CD8-positive, alpha-beta T cell (primary cell): ENCODE measurements at regions of chr2 and their contacts with region 1.

Region 1: DNA sequence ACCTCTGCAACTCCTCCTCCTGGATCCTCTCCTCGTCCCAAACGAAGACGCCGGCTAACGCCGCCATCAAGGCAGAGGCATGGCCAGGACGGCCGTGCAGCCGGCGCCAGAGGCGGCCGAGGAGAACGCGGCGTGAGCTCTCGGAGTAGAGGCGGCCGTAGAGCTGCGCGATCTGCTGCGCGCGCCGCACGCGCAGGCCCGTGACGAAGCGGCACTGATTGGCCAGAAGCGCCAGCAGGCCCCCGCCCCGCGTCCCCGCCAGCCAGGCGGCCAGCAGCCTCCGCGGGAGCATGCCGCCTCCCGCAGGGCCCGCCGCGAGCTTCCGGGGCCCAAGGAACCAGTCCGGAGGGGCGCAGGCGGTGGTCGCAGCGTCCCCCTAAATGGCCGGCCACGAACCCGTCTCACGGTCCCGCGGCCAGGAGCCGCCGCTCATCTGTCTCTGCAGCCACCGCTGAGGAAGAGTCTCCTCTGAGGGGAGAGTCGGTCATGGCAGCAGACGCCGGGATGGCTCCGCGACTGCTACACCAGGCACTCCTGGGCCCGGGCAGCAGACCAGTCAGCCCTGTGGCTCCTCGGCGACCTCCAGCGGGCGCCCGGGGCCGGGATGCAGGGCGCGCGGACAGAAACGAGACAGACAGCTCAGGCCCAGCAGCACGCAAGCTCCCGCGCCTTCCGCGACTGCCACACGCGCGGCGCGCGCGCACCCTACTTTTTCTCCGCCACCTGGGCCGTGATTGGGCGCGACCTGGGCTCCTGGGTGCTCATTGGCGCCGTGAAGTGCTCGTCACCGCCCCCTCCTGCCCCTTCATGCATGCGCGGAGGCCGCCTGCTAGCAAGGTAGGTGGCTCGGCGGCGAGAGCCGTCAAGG is at the start of gene STARD7:
- DNase-seq: peak; percentile 89 to 98 (median 96)
- ATAC-seq: peak; percentile 85
- H3K4me3 ChIP-seq: peak within 1 kb of the TSS; percentile 91
- H3K4me3 Mint-ChIP-seq: peak within 1 kb of the TSS; percentile 100
- H3K27ac ChIP-seq: peak within 1 kb of the TSS; percentile 75
- H3K27ac Mint-ChIP-seq: peak within 1 kb of the TSS; percentile 99
- H3K4me1 ChIP-seq: peaks cover 52% of the 10 kb centered on the region
- H3K4me1 Mint-ChIP-seq: peaks cover 54% of the 10 kb centered on the region
- H3K27me3 ChIP-seq: no peaks in the 10 kb centered on the region
- H3K27me3 Mint-ChIP-seq: no peaks in the 10 kb centered on the region
- CTCF ChIP-seq: no peak
- total RNA-seq, gene STARD7: 75.3 to 85.1 TPM

Region 2: DNA sequence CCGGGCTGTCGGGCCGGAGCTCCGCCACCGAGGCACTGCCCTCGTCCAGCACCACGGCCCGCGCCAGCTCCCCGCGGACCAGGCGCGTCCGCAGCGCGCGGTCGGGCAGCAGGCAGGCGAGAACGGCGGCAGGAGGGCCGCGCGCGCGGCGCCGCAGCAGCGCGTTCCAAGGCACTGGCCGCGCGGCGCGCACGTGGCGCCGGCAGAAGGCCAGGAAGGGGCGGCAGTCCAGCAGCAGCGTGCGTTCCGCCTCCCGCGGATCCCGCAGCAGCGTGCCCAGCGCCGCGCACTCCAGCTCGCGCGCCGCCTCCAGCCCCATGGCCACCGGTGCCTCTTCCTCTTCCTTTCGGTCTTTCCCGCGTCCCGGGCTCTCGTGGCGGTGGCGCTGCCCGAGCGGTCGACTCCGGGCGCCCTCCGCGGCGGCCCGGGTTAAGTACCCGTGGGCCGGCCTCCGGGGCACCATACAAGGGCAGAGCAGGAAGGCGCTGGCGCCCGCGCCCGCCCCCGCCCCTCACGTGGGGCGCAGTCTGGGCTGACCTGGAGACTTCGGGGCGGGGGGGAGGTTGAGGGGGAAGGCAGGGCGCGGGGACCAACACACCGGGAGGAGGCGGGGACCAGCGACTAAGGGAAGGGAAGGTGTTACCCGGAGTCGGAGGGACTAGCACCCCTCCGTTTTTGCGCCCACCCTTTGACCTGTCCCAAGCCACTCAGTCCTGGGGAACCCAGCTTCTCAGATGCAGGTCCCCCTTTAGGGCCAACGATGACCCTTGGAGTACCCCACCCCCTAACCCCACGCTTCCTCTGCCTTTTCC is 63.1 kb before region 1 on chr2 and contains the start of gene DUSP2:
- CTCF ChIA-PET with region 1: no interaction called
- POLR2A ChIA-PET with region 1: interaction called, 12 read pairs
- intact Hi-C with region 1: loop called (anchors 2 kb)
- DNase-seq: peak; percentile 80 to 97 (median 91)
- ATAC-seq: peak; percentile 37
- H3K4me3 ChIP-seq: peak within 1 kb of the TSS; percentile 91 to 96
- H3K4me3 Mint-ChIP-seq: peak within 1 kb of the TSS; percentile 94
- H3K27ac ChIP-seq: peak within 1 kb of the TSS; percentile 98 to 99
- H3K27ac Mint-ChIP-seq: peak within 1 kb of the TSS; percentile 94
- H3K4me1 ChIP-seq: peaks cover 61% of the 10 kb centered on the region
- H3K4me1 Mint-ChIP-seq: peaks cover 57% of the 10 kb centered on the region
- H3K27me3 ChIP-seq: no peaks in the 10 kb centered on the region
- H3K27me3 Mint-ChIP-seq: no peaks in the 10 kb centered on the region
- CTCF ChIP-seq: no peak
- total RNA-seq, gene DUSP2: 1,304 to 1,350 TPM

Region 3: DNA sequence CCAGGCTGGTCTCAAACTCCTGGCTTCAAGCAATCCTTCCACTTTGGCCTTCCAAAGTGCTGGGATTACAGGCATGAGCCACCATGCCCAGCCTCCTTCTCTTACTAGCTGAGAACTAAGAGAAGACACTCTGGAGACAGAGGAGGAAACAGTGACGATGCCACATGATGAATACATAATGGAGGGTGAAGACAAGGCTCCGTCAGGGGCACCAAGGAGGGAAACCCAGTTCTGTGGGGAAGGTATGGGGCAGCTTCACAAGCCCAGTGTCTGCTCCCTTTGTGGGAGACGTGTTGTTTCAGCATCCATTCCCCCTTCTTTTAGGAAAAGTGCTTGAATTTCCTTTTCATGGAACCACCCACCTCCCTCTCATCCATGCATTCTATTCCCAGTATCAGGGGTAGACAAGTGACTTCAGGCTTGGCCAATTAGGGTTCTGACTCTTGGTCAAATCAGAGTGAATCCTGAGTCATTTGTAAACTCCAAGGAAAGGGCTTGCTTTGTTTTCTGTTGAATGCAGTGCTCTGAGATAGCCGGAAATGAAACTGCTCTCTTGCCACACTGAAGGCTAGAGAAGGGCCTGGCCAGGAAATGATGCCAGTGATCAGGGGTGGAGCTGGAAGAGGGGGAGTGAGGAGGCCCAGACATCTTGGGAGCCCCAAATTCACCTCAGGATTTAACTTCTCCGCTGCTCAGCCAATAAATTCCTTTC is 33.7 kb after region 1 on chr2:
- CTCF ChIA-PET with region 1: no interaction called
- POLR2A ChIA-PET with region 1: interaction called, 6 read pairs
- intact Hi-C with region 1: loop called in 1 of 2 experiments (anchors 2 kb)
- DNase-seq: peak in 7 of 9 experiments; percentile 26 to 78 (median 53)
- ATAC-seq: peak; percentile 82
- H3K4me3 ChIP-seq: peak overlapping the region; percentile 6 to 10
- H3K4me3 Mint-ChIP-seq: peak overlapping the region; percentile 68
- H3K27ac ChIP-seq: peak overlapping the region; percentile 46 to 94
- H3K27ac Mint-ChIP-seq: peak overlapping the region; percentile 94
- H3K4me1 ChIP-seq: peaks cover 41% of the 10 kb centered on the region
- H3K4me1 Mint-ChIP-seq: peaks cover 40% of the 10 kb centered on the region
- H3K27me3 ChIP-seq: no peaks in the 10 kb centered on the region
- H3K27me3 Mint-ChIP-seq: no peaks in the 10 kb centered on the region
- CTCF ChIP-seq: no peak

Region 4: DNA sequence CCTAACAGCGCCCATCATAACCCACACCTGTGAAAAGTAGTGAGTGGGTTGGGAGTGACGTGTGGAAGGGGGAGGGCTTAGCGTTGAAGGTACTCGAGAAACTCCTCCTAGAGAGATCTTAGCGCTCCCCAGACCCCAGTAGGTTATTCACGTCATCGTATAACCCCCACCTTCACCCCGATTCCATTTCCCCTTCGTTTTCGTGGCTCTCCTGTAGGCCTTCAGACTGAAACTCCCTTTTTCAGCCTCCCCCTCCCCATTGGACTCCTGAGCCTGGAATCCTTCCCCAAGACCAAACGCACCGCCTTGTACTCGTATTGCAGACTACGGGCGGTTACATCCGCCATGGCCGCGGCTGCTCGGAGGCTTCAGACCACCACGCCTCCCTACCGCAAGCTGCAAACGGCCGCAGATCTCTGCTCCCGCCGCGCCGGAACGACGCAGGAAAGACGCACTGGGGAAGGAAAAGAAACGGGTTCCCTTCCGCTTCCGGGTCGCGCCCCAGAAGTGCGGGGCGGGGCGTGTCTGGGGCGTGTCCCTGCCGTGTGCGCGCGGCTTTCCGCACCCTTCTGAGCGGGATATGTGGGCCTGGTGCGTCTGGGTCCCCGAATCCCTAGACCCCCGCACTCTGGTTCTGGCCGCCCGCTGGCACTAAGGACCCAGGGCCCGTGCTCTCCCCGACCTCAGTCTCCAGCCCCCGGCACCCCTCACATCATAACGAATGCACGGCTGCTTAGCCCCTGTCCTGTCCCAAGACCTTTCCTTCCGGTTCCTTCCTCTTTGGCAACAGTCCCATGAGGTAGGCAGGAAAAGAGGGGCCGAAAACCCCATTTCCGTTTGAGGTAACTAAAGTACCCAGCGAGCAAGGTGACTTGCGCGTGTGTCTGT is 97.0 kb after region 1 on chr2 and contains the start of gene SNRNP200:
- CTCF ChIA-PET with region 1: no interaction called
- POLR2A ChIA-PET with region 1: interaction called, 7 read pairs
- intact Hi-C with region 1: loop called in 1 of 2 experiments (anchors 1 kb)
- DNase-seq: peak; percentile 78 to 97 (median 91)
- ATAC-seq: peak; percentile 82
- H3K4me3 ChIP-seq: peak within 1 kb of the TSS; percentile 84 to 95
- H3K4me3 Mint-ChIP-seq: peak within 1 kb of the TSS; percentile 100
- H3K27ac ChIP-seq: peak within 1 kb of the TSS; percentile 96 to 98
- H3K27ac Mint-ChIP-seq: peak within 1 kb of the TSS; percentile 100
- H3K4me1 ChIP-seq: peaks cover 39% of the 10 kb centered on the region
- H3K4me1 Mint-ChIP-seq: peaks cover 55% of the 10 kb centered on the region
- H3K27me3 ChIP-seq: no peaks in the 10 kb centered on the region
- H3K27me3 Mint-ChIP-seq: no peaks in the 10 kb centered on the region
- CTCF ChIP-seq: no peak
- total RNA-seq, gene SNRNP200: 318 to 348 TPM

Region 5: DNA sequence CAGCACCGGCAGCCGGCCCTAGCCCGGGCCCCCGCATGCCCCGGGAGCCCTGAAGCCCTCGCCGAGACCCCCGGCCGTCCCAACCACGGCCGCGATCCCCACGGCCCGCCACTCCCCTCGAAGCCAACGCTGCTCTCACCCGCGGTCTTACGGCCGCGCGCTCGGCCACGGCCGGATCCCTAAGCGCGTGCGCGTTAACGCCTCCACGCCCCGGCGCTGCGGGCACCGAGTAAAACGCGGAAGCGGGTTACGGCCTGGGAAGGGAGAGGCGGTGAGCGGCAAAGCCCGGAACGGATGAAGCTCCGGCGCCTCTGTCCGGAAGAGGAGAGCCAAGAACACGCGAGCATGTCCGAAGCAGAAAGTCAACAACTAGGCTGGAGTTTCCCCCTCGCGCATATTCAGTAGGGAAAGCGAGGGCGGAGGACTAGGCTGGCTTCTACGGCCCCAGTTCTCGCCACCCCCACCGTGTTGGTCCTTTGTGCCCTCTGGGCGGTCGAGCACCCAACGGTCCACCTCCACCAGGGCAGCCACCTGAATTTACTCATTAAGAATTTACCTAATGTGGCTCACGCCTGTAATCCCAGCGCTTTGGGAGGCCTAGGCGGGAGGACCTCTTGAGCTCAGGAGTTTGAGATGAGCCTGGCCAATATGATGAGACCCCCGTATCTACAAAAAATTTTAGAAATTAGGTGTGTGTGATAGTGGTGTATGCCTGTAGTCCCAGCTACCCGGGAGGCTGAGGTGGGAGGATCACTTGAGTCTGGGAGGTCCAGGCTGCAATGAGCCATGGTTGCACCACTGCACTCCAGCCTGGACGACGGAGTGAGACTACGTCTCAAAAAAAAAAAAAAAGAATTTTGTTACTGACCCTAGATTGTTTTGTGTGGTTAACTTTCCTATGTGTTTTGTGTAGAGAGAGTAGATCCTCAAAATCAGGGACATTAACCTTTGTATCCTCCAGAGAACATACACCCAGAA is 430.1 kb after region 1 on chr2 and contains the start of gene KANSL3:
- CTCF ChIA-PET with region 1: no interaction called
- POLR2A ChIA-PET with region 1: no interaction called
- intact Hi-C with region 1: loop called in 1 of 2 experiments (anchors 1 kb)
- DNase-seq: peak; percentile 79 to 95 (median 88)
- ATAC-seq: peak; percentile 85
- H3K4me3 ChIP-seq: peak within 1 kb of the TSS; percentile 71 to 95
- H3K4me3 Mint-ChIP-seq: peak within 1 kb of the TSS; percentile 93
- H3K27ac ChIP-seq: peak within 1 kb of the TSS; percentile 83 to 91
- H3K27ac Mint-ChIP-seq: peak within 1 kb of the TSS; percentile 96
- H3K4me1 ChIP-seq: peaks cover 24% of the 10 kb centered on the region
- H3K4me1 Mint-ChIP-seq: peaks cover 32% of the 10 kb centered on the region
- H3K27me3 ChIP-seq: no peaks in the 10 kb centered on the region
- H3K27me3 Mint-ChIP-seq: peaks cover 2% of the 10 kb centered on the region
- CTCF ChIP-seq: no peak
- total RNA-seq, gene KANSL3: 58.8 to 60.4 TPM